ENCODE measurements at regions of chr2 and their contacts with region 1.

Region 1: DNA sequence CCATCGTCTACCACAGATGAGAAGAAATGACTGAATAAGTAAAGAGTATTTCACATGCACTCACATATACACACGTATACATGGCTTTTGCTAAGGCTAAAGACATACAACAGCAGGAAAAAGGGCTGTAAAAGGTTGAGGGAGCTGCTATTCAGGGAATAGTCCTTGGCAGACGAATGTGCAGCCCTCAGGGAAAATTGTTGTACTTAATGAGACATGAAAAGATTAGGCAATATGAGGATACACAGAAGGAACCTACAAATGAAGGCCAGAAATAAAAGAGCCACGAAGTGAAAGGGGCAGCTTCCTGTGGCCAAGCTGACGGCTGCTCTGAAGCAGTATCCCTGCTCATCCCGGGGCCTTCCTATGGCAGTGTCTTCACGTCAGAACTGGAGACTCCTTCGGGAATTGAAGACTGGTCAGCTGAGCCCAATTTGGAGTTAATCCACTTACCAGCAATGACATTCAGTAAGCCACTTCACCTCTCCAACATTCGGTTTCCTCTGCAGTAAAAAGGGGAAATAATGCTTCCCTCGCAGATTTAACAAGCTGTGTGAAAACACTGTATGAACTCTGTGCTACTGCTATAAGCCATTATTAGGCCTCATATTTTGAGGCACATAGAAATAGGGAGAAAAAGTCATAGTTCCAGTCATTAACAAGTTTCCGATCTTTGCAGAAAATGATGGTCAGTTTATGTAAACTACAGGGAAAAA is 221.8 kb downstream of the STK39 start:
- DNase-seq: no peak
- ATAC-seq: peak; percentile 21
- H3K4me3 Mint-ChIP-seq: no peak overlapping the region
- H3K27ac Mint-ChIP-seq: no peak overlapping the region
- H3K4me1 Mint-ChIP-seq: peaks cover 21% of the 10 kb centered on the region
- H3K27me3 Mint-ChIP-seq: no peaks in the 10 kb centered on the region
- CTCF ChIP-seq: no peak

Region 2: DNA sequence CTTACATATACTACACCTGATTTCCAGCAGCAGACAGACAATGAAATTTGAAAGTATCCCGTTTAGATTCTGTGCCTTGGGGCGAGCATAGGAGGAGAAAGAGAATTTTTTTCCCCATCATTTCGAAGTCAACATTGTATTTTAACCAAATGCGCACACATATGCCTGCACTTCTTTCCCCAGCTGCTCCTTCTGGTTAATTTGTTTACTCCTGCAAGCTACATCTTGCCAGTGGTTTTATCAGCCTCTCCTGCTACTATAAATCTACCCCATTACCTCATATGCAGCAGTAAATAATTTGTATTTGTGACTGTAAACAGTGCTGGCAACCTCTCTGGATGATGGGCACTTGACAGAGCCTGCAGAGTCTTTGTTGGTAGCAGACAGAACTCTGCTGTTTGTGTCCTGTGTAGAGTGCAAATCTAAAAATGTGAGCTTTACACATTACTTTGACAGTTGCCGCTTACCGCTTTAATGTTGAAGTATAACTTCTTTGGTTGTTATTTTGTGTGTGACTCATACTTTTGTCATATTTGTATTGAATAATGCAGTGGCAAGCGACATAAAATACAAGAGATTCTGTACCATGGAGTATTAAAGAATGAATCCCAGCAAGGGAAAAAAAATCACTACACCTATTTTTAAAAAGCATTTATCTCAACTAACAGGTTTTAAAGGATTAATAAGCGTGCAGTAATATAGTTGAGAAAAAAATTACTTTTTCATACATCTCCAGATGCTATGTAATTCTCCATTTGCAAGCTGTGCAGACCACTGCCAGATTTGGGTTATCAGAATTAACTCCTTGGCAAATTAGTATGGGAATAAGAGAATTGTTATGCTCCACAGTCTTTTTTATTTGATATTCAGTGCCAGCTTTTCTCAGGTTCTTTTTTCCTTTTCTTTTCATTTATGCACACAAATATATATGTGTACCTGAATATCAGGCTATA is 600.6 kb before region 1 on chr2:
- CTCF ChIA-PET with region 1: no interaction called
- POLR2A ChIA-PET with region 1: no interaction called
- intact Hi-C with region 1: no loop called
- DNase-seq: no peak
- ATAC-seq: no peak
- H3K4me3 Mint-ChIP-seq: no peak overlapping the region
- H3K27ac Mint-ChIP-seq: no peak overlapping the region
- H3K4me1 Mint-ChIP-seq: no peaks in the 10 kb centered on the region
- H3K27me3 Mint-ChIP-seq: no peaks in the 10 kb centered on the region
- CTCF ChIP-seq: no peak

Region 3: GRCh38 chr2:167954495-167954894 is 71.2 kb before region 1 on chr2:
- CTCF ChIA-PET with region 1: no interaction called
- POLR2A ChIA-PET with region 1: no interaction called
- intact Hi-C with region 1: no loop called
- DNase-seq: no peak
- ATAC-seq: no peak
- H3K4me3 Mint-ChIP-seq: no peak overlapping the region
- H3K27ac Mint-ChIP-seq: no peak overlapping the region
- H3K4me1 Mint-ChIP-seq: no peaks in the 10 kb centered on the region
- H3K27me3 Mint-ChIP-seq: no peaks in the 10 kb centered on the region
- CTCF ChIP-seq: no peak

Region 4: DNA sequence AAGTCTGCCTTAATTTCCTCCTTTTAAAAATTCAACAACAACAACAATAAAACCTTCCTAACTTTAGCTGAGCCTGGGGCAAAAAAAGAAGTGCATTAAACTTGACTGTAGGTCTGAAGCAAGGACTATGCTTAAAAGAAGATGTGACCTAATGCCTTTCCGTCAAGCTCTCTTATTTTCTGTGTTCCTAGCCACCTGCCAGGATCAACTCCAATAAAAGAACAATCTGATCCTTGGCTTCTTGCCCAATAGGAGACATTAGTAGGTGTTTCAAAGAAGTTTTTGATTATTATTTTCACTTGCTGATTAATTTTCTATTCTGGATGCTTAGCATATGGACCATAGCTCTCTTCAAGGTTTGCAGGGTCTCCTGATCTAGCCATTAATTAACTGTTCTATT is 15.7 kb before region 1 on chr2:
- CTCF ChIA-PET with region 1: no interaction called
- POLR2A ChIA-PET with region 1: interaction called, 3 read pairs
- intact Hi-C with region 1: loop called (anchors 2 kb)
- DNase-seq: no peak
- ATAC-seq: no peak
- H3K4me3 Mint-ChIP-seq: no peak overlapping the region
- H3K27ac Mint-ChIP-seq: no peak overlapping the region
- H3K4me1 Mint-ChIP-seq: peaks cover 5% of the 10 kb centered on the region
- H3K27me3 Mint-ChIP-seq: no peaks in the 10 kb centered on the region
- CTCF ChIP-seq: no peak

Measured in activated B cell treated with CpG ODN at 0.5 μM for 24 hours (primary cell).